Naive thymus-derived CD8-positive, alpha-beta T cell (primary cell): ENCODE measurements at regions of chr4 and their contacts with region 1.

Region 1: DNA sequence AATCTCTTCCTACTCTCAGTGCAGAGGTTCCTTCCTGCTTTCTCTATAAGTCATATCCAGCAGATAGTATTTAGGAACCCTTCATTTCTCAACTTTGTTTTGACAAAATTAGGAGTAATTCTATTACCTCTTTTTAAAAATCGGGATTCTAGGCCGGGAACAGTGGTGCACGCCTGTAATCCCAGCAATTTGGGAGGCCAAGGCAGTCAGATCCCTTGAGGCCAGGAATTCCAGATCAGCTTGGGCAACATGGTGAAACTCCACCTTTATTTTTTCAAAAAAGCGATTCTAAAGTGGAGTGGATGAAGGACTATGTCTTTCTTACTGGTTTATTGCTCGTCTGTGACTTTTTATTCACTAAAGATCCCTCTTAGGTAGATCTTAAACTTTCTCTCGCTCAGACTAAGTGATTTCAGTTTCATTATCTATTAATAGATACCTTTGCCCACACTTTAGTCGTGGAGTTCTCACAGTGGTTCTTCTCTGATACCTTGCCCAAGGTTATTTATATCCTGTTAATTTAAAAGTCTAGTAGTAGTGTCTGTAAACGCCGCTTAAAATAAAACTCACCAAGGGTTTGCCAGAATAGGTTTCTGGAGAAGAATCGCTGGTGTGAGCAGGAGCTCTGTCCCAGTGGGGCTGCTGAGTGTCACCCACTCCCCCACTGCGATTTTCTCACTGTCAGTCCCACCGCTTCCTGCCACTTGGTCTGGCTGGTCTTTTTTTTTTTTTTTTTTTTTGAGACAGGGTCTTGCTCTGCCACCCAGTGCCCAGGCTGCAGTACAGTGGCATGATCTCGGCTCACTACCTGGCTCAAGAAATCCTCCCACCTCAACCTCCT is 27.0 kb upstream of the TMEM131L start:
- DNase-seq: peak; percentile 3 to 71 (median 48)
- ATAC-seq: peak; percentile 73 to 88
- H3K4me3 Mint-ChIP-seq: peak overlapping the region; percentile 83 to 92 (median 86)
- H3K27ac Mint-ChIP-seq: peak overlapping the region; percentile 84 to 97 (median 94)
- H3K4me1 Mint-ChIP-seq: peaks cover 26 to 62% (median 47%) of the 10 kb centered on the region in 4 donors
- H3K27me3 Mint-ChIP-seq: no peaks in the 10 kb centered on the region

Region 2: GRCh38 chr4:153426207-153426885 is 12.8 kb before region 1 on chr4:
- POLR2A ChIA-PET with region 1: interaction called, 17 read pairs
- DNase-seq: peak in 6 of 10 donors; percentile 24 to 86 (median 66)
- ATAC-seq: peak; percentile 87 to 92
- H3K4me3 Mint-ChIP-seq: peak overlapping the region; percentile 52 to 85 (median 68)
- H3K27ac Mint-ChIP-seq: peak overlapping the region; percentile 89 to 98 (median 95)
- H3K4me1 Mint-ChIP-seq: peaks cover 20 to 62% (median 56%) of the 10 kb centered on the region in 4 donors
- H3K27me3 Mint-ChIP-seq: no peaks in the 10 kb centered on the region